Dorsolateral prefrontal cortex (tissue), 120 donors: ENCODE measurements at regions of chr18 and their contacts with region 1.

Region 1: GRCh38 chr18:70454704-70455322 is 166.0 kb downstream of the SOCS6 start:
- DNase-seq: peak in 2 of 10 donors; percentile 45 to 63
- H3K4me3 ChIP-seq: no peak overlapping the region
- H3K27ac ChIP-seq: no peak overlapping the region
- H3K27me3 ChIP-seq: peaks cover 0 to 4% (median 0%) of the 10 kb centered on the region in 45 donors
- CTCF ChIP-seq: peak; percentile 64 to 93 (median 86)

Region 2: GRCh38 chr18:70195852-70196434 is 258.9 kb before region 1 on chr18:
- intact Hi-C with region 1: loop called (anchors 2 to 5 kb)
- DNase-seq: peak in 2 of 10 donors; percentile 28 to 49
- H3K4me3 ChIP-seq: no peak overlapping the region
- H3K27ac ChIP-seq: peak overlapping the region in 7 of 59 donors; percentile 2 to 35 (median 22)
- H3K27me3 ChIP-seq: no peaks in the 10 kb centered on the region
- CTCF ChIP-seq: peak; percentile 68 to 95 (median 86)